ENCODE measurements at regions of chr2 and their contacts with region 1.

Region 1: GRCh38 chr2:46018773-46019591 is 278.2 kb upstream of the EPAS1 start:
- DNase-seq: no peak
- H3K4me3 Mint-ChIP-seq: peak overlapping the region; percentile 34
- H3K27ac Mint-ChIP-seq: peak overlapping the region; percentile 75
- H3K4me1 Mint-ChIP-seq: peaks cover 50% of the 10 kb centered on the region
- H3K27me3 Mint-ChIP-seq: no peaks in the 10 kb centered on the region

Region 2: GRCh38 chr2:45728458-45728942 is 290.5 kb before region 1 on chr2:
- intact Hi-C with region 1: no loop called
- DNase-seq: no peak
- H3K4me3 Mint-ChIP-seq: no peak overlapping the region
- H3K27ac Mint-ChIP-seq: no peak overlapping the region
- H3K4me1 Mint-ChIP-seq: peaks cover 16% of the 10 kb centered on the region
- H3K27me3 Mint-ChIP-seq: peaks cover 3% of the 10 kb centered on the region

Region 3: GRCh38 chr2:46032996-46033395 is 14.0 kb after region 1 on chr2:
- intact Hi-C with region 1: loop called (anchors 2 kb)
- DNase-seq: peak; percentile 38
- H3K4me3 Mint-ChIP-seq: no peak overlapping the region
- H3K27ac Mint-ChIP-seq: peak overlapping the region; percentile 41
- H3K4me1 Mint-ChIP-seq: peaks cover 22% of the 10 kb centered on the region
- H3K27me3 Mint-ChIP-seq: no peaks in the 10 kb centered on the region

Region 4: GRCh38 chr2:46239847-46240181 is 220.8 kb after region 1 on chr2:
- intact Hi-C with region 1: loop called (anchors 1 kb)
- DNase-seq: peak; percentile 61
- H3K4me3 Mint-ChIP-seq: peak overlapping the region; percentile 6
- H3K27ac Mint-ChIP-seq: peak overlapping the region; percentile 89
- H3K4me1 Mint-ChIP-seq: peaks cover 49% of the 10 kb centered on the region
- H3K27me3 Mint-ChIP-seq: peaks cover 3% of the 10 kb centered on the region